CD4-positive, alpha-beta T cell (primary cell): ENCODE measurements at regions of chr5 and their contacts with region 1.

Region 1: DNA sequence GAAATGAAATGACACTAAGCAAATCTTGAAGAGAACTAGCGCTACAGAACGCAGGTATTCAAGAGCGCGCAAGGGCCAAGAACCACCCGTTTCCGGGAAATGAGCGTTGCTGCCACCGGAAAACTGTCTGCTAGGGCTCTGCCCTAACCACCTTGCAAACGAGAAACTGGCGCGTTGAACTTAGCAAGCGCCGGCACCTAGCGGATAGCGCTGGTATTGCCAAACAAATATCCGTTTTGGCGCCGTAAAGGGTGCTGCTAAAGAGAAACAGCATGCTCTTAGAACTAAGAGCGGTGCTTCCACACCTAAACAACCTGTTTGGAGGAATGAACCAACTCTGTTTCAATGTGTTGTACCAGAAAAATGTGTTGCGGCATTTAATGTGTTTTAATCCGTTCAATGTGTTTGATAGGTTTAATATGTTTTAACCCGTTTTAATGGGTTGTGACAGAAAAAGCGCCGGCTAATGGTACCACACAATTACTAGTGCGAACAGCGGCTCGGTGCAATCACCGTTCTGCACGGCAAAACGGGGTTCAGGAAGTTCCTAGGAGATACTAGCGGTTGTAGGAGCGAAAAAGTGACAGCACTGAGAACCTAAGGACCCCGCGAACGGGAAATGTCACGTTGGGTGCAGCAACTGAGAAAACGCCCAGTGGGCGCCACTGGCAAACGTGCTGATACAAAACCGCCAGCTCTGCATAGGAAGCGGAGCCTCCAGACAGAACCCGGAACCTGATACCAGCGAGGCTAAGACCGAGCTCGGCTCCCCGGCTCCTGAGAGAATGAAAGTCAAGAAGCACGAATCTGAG is at the start of gene ANXA2R:
- DNase-seq: peak; percentile 90 to 98 (median 93)
- ATAC-seq: peak; percentile 53
- H3K4me3 ChIP-seq: peak within 1 kb of the TSS; percentile 84
- H3K4me3 Mint-ChIP-seq: peak within 1 kb of the TSS; percentile 98
- H3K27ac ChIP-seq: peak within 1 kb of the TSS; percentile 96 to 98
- H3K27ac Mint-ChIP-seq: peak within 1 kb of the TSS; percentile 98
- H3K4me1 ChIP-seq: peaks cover 73% of the 10 kb centered on the region
- H3K4me1 Mint-ChIP-seq: peaks cover 46% of the 10 kb centered on the region
- H3K27me3 ChIP-seq: no peaks in the 10 kb centered on the region
- H3K27me3 Mint-ChIP-seq: no peaks in the 10 kb centered on the region
- CTCF ChIP-seq: peak; percentile 86
- total RNA-seq, gene ANXA2R: 45.6 to 48.9 TPM

Region 2: DNA sequence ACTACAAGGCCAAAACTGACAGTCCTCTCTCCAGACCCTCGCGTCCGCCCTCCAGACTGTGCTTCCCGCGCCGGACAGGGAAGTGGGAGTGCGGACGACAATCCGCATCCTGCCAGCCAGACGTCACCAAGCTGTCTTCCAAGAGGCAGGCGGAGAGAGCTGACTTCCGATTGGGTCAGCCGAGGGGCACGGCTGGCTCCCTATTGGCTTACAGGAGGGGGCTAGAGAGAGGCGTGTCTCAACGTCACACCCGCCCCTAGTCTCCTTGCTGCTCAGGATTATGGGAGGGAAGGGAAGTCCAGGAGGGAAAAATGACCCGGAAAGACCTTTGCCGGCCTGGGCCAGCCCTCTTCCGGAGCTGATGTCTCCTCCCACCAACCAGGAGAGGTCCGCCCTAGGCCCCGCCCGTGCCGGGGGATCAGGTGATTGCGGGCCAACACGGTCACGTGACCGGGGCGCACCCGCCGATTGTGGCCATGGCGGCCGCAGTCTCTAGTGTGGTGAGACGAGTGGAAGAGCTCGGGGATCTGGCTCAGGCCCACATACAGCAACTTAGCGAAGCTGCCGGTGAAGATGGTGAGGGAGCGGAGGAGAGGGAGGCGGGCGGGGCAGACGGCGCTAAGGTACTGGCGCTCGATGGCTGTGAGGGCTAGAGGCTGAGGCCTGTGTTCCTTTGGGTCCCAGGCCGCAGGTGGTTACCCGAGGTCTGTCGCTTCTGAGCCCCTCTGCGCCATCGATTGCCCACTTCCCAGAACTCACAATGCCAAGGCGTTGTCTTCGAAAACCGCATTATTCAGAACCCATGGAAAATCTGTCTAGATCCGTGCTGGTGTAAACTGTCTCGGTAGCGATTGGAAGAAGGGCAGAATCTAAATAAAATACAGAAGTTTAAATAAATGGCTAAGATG is 1136.3 kb before region 1 on chr5 and contains the start of gene RIMOC1:
- CTCF ChIA-PET with region 1: no interaction called
- POLR2A ChIA-PET with region 1: interaction called, 12 read pairs
- intact Hi-C with region 1: no loop called
- DNase-seq: peak; percentile 93 to 99 (median 96)
- ATAC-seq: peak; percentile 85
- H3K4me3 ChIP-seq: peak within 1 kb of the TSS; percentile 86
- H3K4me3 Mint-ChIP-seq: peak within 1 kb of the TSS; percentile 98
- H3K27ac ChIP-seq: peak within 1 kb of the TSS; percentile 89 to 90
- H3K27ac Mint-ChIP-seq: peak within 1 kb of the TSS; percentile 99
- H3K4me1 ChIP-seq: peaks cover 20% of the 10 kb centered on the region
- H3K4me1 Mint-ChIP-seq: peaks cover 46% of the 10 kb centered on the region
- H3K27me3 ChIP-seq: no peaks in the 10 kb centered on the region
- H3K27me3 Mint-ChIP-seq: no peaks in the 10 kb centered on the region
- CTCF ChIP-seq: no peak
- total RNA-seq, gene RIMOC1: 9.3 to 10.3 TPM

Region 3: GRCh38 chr5:42779083-42779482 is 261.4 kb before region 1 on chr5:
- CTCF ChIA-PET with region 1: no interaction called
- POLR2A ChIA-PET with region 1: no interaction called
- intact Hi-C with region 1: no loop called
- DNase-seq: no peak
- ATAC-seq: no peak
- H3K4me3 ChIP-seq: no peak overlapping the region
- H3K4me3 Mint-ChIP-seq: no peak overlapping the region
- H3K27ac ChIP-seq: no peak overlapping the region
- H3K27ac Mint-ChIP-seq: no peak overlapping the region
- H3K4me1 ChIP-seq: no peaks in the 10 kb centered on the region
- H3K4me1 Mint-ChIP-seq: no peaks in the 10 kb centered on the region
- H3K27me3 ChIP-seq: no peaks in the 10 kb centered on the region
- H3K27me3 Mint-ChIP-seq: no peaks in the 10 kb centered on the region
- CTCF ChIP-seq: no peak

Region 4: DNA sequence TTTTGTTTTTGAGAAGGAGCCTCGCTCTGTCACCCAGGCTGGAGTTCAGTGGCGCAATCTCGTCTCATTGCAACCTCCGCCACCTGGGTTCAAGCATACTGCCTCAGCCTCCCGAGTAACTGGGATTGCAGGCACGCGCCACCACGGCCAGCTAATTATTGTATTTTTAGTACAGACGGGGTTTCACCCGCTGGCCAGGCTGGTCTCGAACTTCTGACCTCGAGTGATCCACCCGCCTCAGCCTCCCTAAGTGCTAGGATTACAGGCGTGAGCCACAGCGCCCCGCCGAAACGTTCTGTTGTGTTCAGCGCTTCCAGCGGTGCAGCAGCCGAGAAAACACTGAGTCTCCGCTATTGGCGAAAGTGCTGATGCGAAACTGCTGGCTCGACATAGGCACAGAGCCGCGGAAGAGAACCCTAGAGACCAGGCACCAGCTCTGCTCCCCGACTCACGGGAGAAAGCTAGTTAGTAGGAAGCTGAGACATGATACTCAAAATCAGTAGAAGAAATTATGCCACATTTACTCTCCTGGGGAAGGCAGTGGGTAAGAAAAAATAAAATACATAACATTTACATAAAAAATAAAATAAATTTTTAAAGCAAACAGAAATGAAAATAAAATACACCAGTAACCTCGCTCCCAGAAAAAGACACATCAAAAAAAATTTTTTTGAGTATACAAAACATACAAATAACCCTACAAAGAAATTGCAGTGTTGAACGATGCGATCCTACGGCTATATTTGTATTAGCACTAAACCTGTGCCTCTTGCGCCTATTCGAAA is 31.9 kb before region 1 on chr5:
- CTCF ChIA-PET with region 1: interaction called, 29 read pairs
- POLR2A ChIA-PET with region 1: interaction called, 595 read pairs
- intact Hi-C with region 1: loop called in 1 of 2 experiments (anchors 1 kb)
- DNase-seq: peak; percentile 87 to 97 (median 92)
- ATAC-seq: peak; percentile 63
- H3K4me3 ChIP-seq: peak overlapping the region; percentile 82
- H3K4me3 Mint-ChIP-seq: peak overlapping the region; percentile 92
- H3K27ac ChIP-seq: peak overlapping the region; percentile 91 to 95
- H3K27ac Mint-ChIP-seq: peak overlapping the region; percentile 95
- H3K4me1 ChIP-seq: peaks cover 36% of the 10 kb centered on the region
- H3K4me1 Mint-ChIP-seq: peaks cover 42% of the 10 kb centered on the region
- H3K27me3 ChIP-seq: no peaks in the 10 kb centered on the region
- H3K27me3 Mint-ChIP-seq: no peaks in the 10 kb centered on the region
- CTCF ChIP-seq: no peak

Region 5: GRCh38 chr5:43027054-43027785 is 13.3 kb before region 1 on chr5:
- CTCF ChIA-PET with region 1: interaction called, 179 read pairs
- POLR2A ChIA-PET with region 1: interaction called, 1,378 read pairs
- intact Hi-C with region 1: loop called (anchors 1 to 2 kb)
- DNase-seq: no peak
- ATAC-seq: no peak
- H3K4me3 ChIP-seq: no peak overlapping the region
- H3K4me3 Mint-ChIP-seq: no peak overlapping the region
- H3K27ac ChIP-seq: no peak overlapping the region
- H3K27ac Mint-ChIP-seq: no peak overlapping the region
- H3K4me1 ChIP-seq: peaks cover 3% of the 10 kb centered on the region
- H3K4me1 Mint-ChIP-seq: peaks cover 24% of the 10 kb centered on the region
- H3K27me3 ChIP-seq: no peaks in the 10 kb centered on the region
- H3K27me3 Mint-ChIP-seq: no peaks in the 10 kb centered on the region
- CTCF ChIP-seq: no peak

Region 6: DNA sequence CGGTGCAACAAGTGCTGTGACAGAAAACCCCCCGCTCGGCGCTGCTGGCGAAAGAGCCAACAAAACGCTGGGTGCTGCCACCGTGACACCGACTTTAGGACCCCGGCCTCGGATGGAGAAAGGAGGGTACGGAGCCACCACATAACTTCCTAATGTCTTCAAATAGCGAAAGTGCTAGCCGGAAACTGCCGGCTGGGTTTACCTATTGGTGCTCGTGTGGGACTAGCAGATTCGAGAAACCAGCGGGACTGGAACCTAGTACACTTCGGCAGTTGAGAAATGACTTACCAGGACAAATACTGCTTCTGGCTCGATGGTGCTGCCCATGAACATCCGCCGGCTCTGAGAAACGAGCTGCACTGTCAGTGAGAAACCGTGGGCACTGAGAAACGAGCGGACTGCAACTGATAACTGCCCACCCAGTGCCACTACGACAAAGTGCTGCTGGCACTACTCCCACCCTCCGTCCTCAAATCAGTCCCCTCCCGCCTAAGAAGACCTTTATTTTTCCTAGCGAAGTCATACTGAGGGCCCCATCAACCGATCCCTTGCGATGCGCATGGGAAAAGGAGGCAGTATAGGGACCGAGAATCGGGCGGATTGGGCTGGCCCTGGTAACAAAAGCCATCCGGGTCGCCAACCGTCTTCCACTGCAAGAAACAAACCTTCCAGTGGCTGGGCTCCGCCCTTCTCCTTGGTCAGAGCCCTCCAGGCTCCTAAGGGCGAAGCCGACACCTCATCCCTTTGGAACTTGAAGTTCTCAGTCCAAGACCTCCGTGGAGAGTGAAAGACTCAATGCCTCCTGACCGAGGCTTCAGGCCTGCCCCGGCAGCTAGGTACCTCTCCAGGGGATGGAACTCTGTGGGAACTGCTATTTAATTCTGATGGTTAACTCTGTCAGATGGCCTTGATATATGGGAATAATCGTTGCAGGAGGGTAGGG is 26.6 kb after region 1 on chr5:
- CTCF ChIA-PET with region 1: interaction called, 65 read pairs
- POLR2A ChIA-PET with region 1: interaction called, 703 read pairs
- intact Hi-C with region 1: loop called (anchors 1 kb)
- DNase-seq: peak; percentile 84 to 94 (median 90)
- ATAC-seq: peak; percentile 45
- H3K4me3 ChIP-seq: peak overlapping the region; percentile 78
- H3K4me3 Mint-ChIP-seq: peak overlapping the region; percentile 97
- H3K27ac ChIP-seq: peak overlapping the region; percentile 97 to 98
- H3K27ac Mint-ChIP-seq: peak overlapping the region; percentile 96
- H3K4me1 ChIP-seq: peaks cover 55% of the 10 kb centered on the region
- H3K4me1 Mint-ChIP-seq: peaks cover 49% of the 10 kb centered on the region
- H3K27me3 ChIP-seq: no peaks in the 10 kb centered on the region
- H3K27me3 Mint-ChIP-seq: no peaks in the 10 kb centered on the region
- CTCF ChIP-seq: no peak

Region 7: GRCh38 chr5:43105369-43106289 is 65.1 kb after region 1 on chr5:
- CTCF ChIA-PET with region 1: interaction called, 6 read pairs
- POLR2A ChIA-PET with region 1: interaction called, 21 read pairs
- intact Hi-C with region 1: loop called (anchors 1 to 2 kb)
- DNase-seq: peak; percentile 85 to 97 (median 88)
- ATAC-seq: peak; percentile 90
- H3K4me3 ChIP-seq: peak overlapping the region; percentile 51
- H3K4me3 Mint-ChIP-seq: peak overlapping the region; percentile 91
- H3K27ac ChIP-seq: no peak overlapping the region
- H3K27ac Mint-ChIP-seq: peak overlapping the region; percentile 78
- H3K4me1 ChIP-seq: peaks cover 36% of the 10 kb centered on the region
- H3K4me1 Mint-ChIP-seq: peaks cover 41% of the 10 kb centered on the region
- H3K27me3 ChIP-seq: no peaks in the 10 kb centered on the region
- H3K27me3 Mint-ChIP-seq: no peaks in the 10 kb centered on the region
- CTCF ChIP-seq: peak; percentile 100